HEK293 (cell line): ENCODE measurements at regions of chr16 and their contacts with region 1.

Region 1: DNA sequence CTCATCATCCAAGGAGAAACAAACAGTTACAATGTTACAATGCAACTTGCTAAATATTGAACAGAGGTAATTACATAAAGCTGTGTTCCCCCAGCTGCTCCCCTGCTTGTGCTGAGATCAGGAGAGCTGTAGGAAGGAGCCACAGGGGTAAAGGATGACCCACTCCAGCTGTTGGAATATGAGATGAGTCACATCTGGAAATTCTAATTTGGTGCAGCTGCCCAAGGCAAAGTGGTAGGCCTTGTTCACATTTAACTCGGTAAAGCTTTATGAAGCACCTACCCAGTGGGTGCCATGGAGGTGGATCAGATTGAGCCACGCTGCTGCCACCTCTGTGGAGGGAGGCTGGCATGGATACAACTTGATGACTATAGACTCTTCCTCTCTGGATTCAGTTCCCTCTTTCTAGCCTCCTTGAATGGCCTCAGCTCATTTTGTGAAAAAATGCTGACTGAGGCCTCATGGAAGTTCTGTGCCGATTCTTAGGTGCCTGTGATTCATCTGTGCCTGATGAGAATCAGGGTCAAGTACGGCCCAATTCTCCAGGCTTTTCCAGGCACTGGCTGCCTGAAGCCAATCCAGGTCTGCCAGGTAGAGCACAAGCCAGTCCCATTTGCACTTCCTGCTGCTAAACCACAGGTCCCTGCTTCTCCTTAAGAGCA is 7.4 kb downstream of the ZNF689 start:
- H3K4me3 ChIP-seq: no peak overlapping the region
- H3K27ac ChIP-seq: no peak overlapping the region
- H3K4me1 ChIP-seq: no peaks in the 10 kb centered on the region
- CTCF ChIP-seq: no peak

Region 2: DNA sequence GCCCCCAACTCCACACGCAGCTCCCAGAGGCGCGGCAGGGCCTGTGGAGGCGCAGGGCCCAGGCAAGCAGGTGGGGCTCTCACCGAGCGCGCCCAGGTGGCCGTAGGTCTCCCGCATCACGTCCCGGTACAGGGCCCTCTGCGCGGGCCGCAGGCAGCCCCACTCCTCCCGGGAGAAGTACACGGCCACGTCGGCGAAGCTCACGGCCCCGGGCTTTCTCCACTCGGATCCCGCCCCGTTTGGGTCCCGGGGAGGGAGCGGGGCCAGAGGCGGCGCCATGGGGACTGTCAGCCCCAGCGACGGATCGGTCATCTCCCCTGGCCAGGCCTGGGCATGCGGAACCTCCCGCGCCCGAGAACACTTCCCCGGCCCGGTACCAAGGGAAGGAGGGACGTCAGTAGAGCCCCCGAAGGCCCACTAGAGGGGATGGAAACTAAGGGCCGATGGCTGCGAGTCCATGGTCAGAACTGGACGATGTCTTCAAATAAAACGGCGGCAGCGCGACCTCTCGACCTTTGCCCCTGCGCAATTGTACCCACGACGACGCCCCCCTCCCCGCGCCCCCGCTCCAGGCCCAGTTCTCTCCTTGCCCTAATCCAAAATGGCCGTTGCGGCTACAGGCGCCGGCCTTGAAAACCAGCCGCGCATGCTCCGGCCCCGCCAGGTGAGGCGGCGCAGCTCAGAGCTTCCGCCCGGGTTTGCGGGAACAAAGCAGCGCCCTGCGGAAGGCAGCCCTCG is 68.2 kb before region 1 on chr16 and contains the start of gene ZNF747:
- CTCF ChIA-PET with region 1: interaction called, 11 read pairs
- POLR2A ChIA-PET with region 1: interaction called, 3 read pairs
- H3K4me3 ChIP-seq: peak within 1 kb of the TSS; percentile 59
- H3K27ac ChIP-seq: peak within 1 kb of the TSS; percentile 91
- H3K4me1 ChIP-seq: peaks cover 2% of the 10 kb centered on the region; the same call in 1 of the 2 replicates
- CTCF ChIP-seq: peak; percentile 75

Region 3: GRCh38 chr16:30628627-30629540 is 26.1 kb after region 1 on chr16:
- CTCF ChIA-PET with region 1: interaction called, 15 read pairs
- POLR2A ChIA-PET with region 1: interaction called, 7 read pairs
- H3K4me3 ChIP-seq: no peak overlapping the region
- H3K27ac ChIP-seq: no peak overlapping the region
- H3K4me1 ChIP-seq: no peaks in the 10 kb centered on the region
- CTCF ChIP-seq: peak; percentile 83

Region 4: DNA sequence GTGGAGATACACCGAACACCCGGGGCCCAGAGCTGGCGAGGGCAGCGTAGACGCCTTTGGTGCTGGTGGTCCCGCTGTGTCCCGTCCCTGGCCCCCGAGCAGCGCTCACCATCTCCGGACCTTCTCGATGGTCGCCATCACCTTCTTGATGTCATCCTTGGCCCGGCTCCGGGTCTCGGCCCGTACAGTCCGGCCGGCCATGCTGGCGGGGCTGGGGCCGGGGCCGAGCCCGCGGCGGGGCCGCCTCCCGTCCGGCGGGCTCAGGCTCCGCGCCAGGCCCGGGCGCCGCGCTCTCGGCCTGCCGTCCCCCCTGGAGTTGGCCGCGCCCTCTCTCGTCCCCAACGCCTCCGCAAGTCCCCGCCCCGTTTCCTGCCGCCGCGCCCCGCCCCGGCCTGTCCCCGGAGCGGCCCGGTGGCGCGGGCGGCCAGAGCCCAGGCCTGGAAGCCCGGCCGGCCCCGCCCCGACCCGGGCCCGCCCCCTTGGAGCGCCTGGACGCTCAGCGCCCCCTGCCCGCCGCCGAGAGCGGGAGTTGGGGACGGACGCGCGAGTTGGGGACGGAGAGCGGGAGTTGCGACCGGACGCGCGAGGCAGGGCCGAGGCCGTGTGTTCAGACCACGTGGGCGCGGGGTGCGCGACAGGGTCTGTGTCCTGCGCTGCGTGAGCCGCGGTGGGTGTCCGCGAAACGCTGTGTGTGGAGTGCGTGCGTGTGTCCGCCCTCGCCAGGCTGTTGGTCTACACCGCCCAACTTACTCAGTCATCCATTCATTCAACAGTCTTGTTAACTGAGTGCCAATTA is 291.2 kb after region 1 on chr16 and contains the start of gene BCL7C:
- CTCF ChIA-PET with region 1: no interaction called
- POLR2A ChIA-PET with region 1: no interaction called
- H3K4me3 ChIP-seq: peak within 1 kb of the TSS; percentile 84
- H3K27ac ChIP-seq: peak within 1 kb of the TSS; percentile 75
- H3K4me1 ChIP-seq: no peaks in the 10 kb centered on the region; the same call in 1 of the 2 replicates
- CTCF ChIP-seq: peak; percentile 93